Natural killer cell (primary cell): ENCODE measurements at regions of chr11 and their contacts with region 1.

Region 1: DNA sequence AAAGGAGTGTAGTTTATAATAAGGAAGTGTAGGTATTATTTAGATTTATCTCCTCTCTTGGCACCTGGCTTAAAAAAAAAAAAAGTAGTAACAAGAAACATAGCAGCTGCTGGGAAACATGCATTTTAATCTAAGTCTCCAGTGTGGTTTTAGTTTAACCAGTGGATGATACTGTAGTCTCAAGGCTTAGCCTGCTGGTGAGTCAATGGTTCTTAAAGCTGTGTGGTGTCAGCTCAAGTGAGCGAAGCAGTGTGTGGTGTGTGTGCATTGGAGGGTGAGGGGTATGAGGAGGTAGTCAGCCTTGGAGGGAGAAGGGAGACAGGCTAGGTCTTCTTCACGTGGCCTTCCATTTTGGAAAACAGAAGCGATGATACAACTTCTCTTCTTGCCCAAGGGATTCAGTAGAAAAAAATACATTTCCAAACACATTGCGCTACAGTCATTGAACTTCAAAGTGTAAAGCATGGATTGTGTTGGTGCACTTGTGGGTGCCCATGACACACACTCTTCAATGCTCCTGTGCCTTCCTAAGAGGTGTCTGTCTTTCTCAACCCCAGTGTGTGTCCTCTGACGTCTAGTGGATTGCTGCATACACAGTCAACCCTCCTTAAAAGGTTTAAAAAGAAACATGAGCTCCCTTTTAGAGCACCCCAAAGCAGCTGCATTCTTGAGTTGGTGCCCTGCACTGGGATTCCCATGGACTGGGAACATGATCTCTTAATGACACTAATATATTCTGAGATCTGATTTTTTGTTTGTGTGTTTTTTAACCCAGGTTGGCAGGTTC is 40.1 kb downstream of the ZBTB16 start:
- DNase-seq: no peak
- ATAC-seq: peak; percentile 76 to 83 (median 78)
- H3K4me3 ChIP-seq: no peak overlapping the region
- H3K4me3 Mint-ChIP-seq: peak overlapping the region; percentile 65
- H3K27ac ChIP-seq: peak overlapping the region; percentile 22
- H3K27ac Mint-ChIP-seq: peak overlapping the region; percentile 84 to 100
- H3K4me1 ChIP-seq: peaks cover 57% of the 10 kb centered on the region
- H3K4me1 Mint-ChIP-seq: peaks cover 97 to 100% of the 10 kb centered on the region in 2 donors
- H3K27me3 ChIP-seq: no peaks in the 10 kb centered on the region
- H3K27me3 Mint-ChIP-seq: no peaks in the 10 kb centered on the region
- CTCF ChIP-seq: no peak

Region 2: DNA sequence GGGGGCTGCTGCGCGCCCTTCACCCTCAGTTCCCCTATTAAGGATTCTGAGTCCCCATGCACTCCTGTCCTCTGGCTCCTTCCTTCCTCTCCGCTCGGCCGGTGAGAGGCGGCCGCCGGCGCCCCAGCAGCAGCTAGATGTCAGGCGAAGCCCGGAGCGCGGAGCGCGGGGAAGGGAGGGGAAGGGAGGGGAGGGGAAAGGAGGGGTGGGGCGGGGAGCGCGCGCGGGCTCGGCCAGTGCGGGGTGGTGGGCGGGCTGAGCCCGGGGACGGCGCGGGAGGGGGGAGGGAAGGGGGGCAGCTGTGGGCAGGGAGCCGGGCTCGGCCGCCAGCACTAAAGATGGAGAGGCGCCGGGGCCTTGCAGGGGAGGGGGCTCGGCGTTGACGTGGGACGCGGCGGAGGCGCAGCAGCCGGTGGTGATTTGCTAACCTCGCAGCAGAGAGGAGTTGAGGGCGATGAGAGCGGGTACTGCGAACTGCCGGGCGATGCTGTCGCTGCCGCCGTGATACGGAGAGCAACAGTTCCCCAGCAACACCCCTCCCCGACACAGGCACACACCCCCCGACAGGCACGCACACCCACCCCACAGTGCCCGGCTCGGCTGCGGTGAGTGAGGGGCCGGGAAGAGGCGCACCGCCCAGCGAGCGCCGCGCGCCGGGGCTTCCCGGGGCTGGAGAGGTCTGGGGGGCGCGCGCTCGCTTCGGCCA is 40.2 kb before region 1 on chr11 and contains the start of gene ZBTB16:
- intact Hi-C with region 1: loop called (anchors 5 kb)
- DNase-seq: peak; percentile 74 to 78
- ATAC-seq: peak; percentile 64 to 79 (median 77)
- H3K4me3 ChIP-seq: peak within 1 kb of the TSS; percentile 86
- H3K4me3 Mint-ChIP-seq: peak within 1 kb of the TSS; percentile 97
- H3K27ac ChIP-seq: peak within 1 kb of the TSS; percentile 90
- H3K27ac Mint-ChIP-seq: peak within 1 kb of the TSS; percentile 98 to 100
- H3K4me1 ChIP-seq: peaks cover 43% of the 10 kb centered on the region
- H3K4me1 Mint-ChIP-seq: peaks cover 32 to 49% of the 10 kb centered on the region in 2 donors
- H3K27me3 ChIP-seq: no peaks in the 10 kb centered on the region
- H3K27me3 Mint-ChIP-seq: no peaks in the 10 kb centered on the region
- CTCF ChIP-seq: no peak
- total RNA-seq, gene ZBTB16: 104 to 224 (median 156) TPM

Region 3: DNA sequence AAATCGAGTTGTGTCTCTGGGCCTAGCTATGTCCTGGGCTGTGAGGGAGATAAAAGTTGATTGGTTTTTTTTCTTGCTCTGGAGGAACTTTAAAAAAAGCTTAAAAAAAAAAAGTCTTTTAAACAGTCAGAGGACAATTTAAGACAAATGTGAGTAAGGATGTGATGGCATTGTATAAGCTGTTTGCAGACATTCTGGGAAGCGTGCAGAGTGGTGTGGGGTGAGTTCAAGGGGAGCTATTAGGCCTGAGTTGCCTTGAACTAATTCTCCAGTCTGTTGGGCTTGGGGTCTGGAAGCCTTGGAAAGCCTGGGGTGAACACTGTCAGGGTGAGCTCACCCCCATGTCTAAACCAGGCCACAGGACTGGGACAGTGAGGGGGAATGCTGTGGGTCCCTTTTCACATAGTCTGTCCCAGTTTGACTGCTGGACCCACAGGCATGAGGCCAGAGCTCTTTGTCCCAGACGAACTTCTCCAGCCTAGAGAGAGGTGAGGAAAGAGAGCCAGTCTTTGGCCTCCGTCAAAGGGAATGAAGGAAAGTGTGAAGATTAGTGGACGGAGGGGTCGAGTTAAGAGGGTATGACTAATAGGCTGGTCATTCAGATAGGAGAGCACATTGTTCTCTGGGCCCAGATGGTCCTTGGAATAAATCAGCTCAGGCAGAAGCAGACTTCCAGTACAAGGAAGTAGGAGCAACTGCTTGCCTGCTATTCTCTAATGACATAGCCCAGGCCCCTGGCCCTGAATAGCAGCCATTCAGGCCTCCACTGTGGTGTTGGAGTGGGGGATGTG is 120.2 kb after region 1 on chr11:
- intact Hi-C with region 1: no loop called
- DNase-seq: no peak
- ATAC-seq: no peak
- H3K4me3 ChIP-seq: no peak overlapping the region
- H3K4me3 Mint-ChIP-seq: no peak overlapping the region
- H3K27ac ChIP-seq: no peak overlapping the region
- H3K27ac Mint-ChIP-seq: peak overlapping the region; percentile 51 to 55
- H3K4me1 ChIP-seq: peaks cover 40% of the 10 kb centered on the region
- H3K4me1 Mint-ChIP-seq: peaks cover 80 to 82% of the 10 kb centered on the region in 2 donors
- H3K27me3 ChIP-seq: no peaks in the 10 kb centered on the region
- H3K27me3 Mint-ChIP-seq: no peaks in the 10 kb centered on the region
- CTCF ChIP-seq: no peak

Region 4: GRCh38 chr11:114425921-114426679 is 326.5 kb after region 1 on chr11:
- intact Hi-C with region 1: no loop called
- DNase-seq: no peak
- ATAC-seq: no peak
- H3K4me3 ChIP-seq: no peak overlapping the region
- H3K4me3 Mint-ChIP-seq: no peak overlapping the region
- H3K27ac ChIP-seq: no peak overlapping the region
- H3K27ac Mint-ChIP-seq: no peak overlapping the region
- H3K4me1 ChIP-seq: no peaks in the 10 kb centered on the region
- H3K4me1 Mint-ChIP-seq: no peaks in the 10 kb centered on the region
- H3K27me3 ChIP-seq: no peaks in the 10 kb centered on the region
- H3K27me3 Mint-ChIP-seq: no peaks in the 10 kb centered on the region
- CTCF ChIP-seq: no peak